MCF 10A (cell line): ENCODE measurements at regions of chr2 and their contacts with region 1.

Region 1: DNA sequence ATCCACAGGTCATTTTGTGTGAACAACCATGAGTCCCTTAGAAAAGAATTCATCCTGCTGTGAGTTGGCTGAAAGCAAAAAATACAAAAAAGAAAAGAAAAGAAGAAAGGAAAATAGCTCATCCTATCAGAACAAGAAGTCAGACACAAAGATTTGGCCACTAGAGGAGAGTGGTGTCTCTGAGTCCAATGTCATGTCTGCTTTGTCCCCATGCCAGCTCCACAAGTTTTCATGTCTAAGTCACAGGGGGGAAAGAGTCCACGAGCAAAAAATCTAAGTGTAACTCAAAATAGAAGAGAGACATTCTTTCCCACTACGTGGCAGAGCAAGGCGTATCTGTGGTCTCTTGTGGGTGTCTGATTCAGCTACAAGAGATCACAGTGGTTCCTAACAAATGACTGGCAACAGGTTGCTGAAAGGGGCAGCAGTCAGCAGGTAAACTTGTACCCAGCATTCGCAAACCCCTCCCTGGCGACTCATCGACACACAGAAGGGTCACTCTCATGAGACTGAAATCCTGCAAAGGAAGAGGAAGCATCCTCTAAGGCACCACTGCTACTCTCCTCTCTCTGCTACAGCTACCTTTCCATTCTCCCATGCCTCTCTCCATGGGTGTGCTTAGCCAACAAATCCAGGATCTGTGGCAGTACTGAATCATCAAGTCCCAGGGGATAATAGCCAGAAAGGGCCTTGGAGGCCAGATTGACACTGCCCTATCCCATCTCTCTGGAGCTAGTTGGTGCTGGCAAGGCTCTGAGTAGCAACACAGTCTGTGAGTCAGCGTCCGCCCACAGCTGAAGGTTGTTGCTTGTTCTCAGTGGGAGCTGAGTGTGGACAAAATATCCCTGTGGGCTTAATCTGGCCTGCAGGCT is 123.0 kb upstream of the SLC39A10 start:
- DNase-seq: peak; percentile 91
- H3K4me3 Mint-ChIP-seq: no peak overlapping the region
- H3K27ac Mint-ChIP-seq: peak overlapping the region; percentile 91
- H3K4me1 Mint-ChIP-seq: peaks cover 24% of the 10 kb centered on the region
- H3K27me3 Mint-ChIP-seq: no peaks in the 10 kb centered on the region
- CTCF ChIP-seq: no peak

Region 2: GRCh38 chr2:195308163-195308562 is 225.8 kb before region 1 on chr2:
- CTCF ChIA-PET with region 1: no interaction called
- POLR2A ChIA-PET with region 1: no interaction called
- intact Hi-C with region 1: no loop called
- DNase-seq: no peak
- H3K4me3 Mint-ChIP-seq: no peak overlapping the region
- H3K27ac Mint-ChIP-seq: no peak overlapping the region
- H3K4me1 Mint-ChIP-seq: no peaks in the 10 kb centered on the region
- H3K27me3 Mint-ChIP-seq: no peaks in the 10 kb centered on the region
- CTCF ChIP-seq: no peak

Region 3: GRCh38 chr2:195520671-195521155 is 13.3 kb before region 1 on chr2:
- CTCF ChIA-PET with region 1: interaction called, 3 read pairs
- POLR2A ChIA-PET with region 1: interaction called, 10 read pairs
- intact Hi-C with region 1: no loop called
- DNase-seq: peak; percentile 64
- H3K4me3 Mint-ChIP-seq: no peak overlapping the region
- H3K27ac Mint-ChIP-seq: peak overlapping the region; percentile 28
- H3K4me1 Mint-ChIP-seq: peaks cover 10% of the 10 kb centered on the region
- H3K27me3 Mint-ChIP-seq: no peaks in the 10 kb centered on the region
- CTCF ChIP-seq: no peak

Region 4: DNA sequence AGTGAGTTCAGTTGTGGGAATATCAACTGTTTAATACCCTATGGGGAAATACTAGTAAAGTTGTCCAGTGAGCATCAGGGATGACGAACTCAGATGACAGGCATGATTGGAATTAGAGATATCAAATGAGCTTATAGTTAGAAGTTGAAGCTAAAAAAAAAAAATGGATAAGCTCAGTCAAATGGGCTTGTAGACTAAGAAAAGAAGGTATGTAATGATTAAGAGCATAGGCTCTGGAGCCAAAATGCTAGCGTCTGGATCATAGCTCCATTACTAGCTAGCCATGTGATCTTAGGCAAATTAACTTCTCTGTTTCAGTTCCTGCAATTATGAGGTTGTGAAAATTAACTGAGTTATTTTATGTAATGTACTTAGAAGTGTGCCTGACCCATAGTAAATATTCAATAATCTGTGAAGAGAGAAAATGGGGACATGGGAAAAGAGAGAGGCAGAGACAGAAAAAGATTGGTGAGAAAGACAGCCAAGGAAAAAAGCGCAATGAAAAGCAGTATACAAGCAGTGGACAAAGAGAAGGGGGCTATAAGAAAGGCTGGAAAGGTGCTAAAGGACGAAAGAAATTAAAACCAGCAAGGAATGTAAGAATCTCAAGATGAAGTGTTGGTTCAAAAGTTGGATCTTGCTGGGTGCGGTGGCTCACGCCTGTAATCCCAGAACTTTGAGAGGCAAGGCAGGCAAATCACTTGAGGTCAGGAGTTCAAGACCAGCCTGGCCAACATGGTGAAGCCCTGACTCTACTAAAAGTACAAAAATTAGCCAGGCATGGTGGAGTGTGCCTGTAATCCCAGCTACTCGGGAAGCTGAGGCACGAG is 27.4 kb after region 1 on chr2:
- CTCF ChIA-PET with region 1: no interaction called
- POLR2A ChIA-PET with region 1: interaction called, 11 read pairs
- intact Hi-C with region 1: no loop called
- DNase-seq: peak; percentile 46
- H3K4me3 Mint-ChIP-seq: no peak overlapping the region
- H3K27ac Mint-ChIP-seq: peak overlapping the region; percentile 87
- H3K4me1 Mint-ChIP-seq: peaks cover 24% of the 10 kb centered on the region
- H3K27me3 Mint-ChIP-seq: no peaks in the 10 kb centered on the region
- CTCF ChIP-seq: no peak